ENCODE measurements at regions of chr3 and their contacts with region 1.

Region 1: DNA sequence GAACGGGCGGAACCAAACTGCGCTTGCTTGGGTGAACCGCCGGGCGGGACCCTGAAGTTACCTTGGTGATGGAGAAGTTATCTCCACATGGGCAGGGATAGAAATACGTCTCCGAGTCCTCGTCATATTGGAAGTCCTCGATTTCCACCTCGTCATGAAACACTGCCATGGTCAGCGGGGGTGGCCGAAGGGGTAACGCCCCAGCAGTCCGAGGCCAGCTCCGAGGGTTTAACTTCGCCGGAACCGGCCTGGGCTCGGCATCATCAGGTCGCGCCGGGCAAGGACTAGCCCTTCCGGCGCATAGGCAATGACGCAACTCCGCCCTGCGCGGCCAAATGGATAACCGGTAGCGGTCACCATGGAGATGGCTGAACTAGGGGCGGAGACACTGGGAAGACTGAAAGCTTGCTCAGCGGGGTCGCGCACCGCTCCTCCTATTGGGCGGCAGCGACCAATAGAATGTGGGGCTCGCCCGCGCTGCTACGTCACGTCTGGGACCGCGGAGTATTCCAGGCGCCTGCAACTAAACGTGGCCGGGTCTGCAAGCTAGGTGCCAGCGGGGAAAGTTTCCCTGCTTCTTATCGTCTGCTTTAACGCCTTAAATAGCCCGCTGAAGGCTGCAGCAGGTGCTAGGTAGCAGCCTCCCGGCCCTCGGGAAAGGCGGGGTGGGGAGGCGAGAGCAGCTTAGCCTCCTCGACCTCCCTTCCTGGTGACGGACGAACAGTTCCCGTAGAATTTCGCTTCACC is at the starts of genes DPH3 and OXNAD1:
- DNase-seq: peak; percentile 99
- ATAC-seq: peak; percentile 96
- H3K4me3 Mint-ChIP-seq: peak within 1 kb of the TSS; percentile 100
- H3K27ac Mint-ChIP-seq: peak within 1 kb of the TSS; percentile 100
- H3K4me1 Mint-ChIP-seq: peaks cover 25% of the 10 kb centered on the region
- H3K27me3 Mint-ChIP-seq: no peaks in the 10 kb centered on the region
- CTCF ChIP-seq: no peak
- total RNA-seq, gene DPH3: 13.4 and 14.7 TPM in 2 replicates
- total RNA-seq, gene OXNAD1: 5.5 and 8.7 TPM in 2 replicates

Region 2: GRCh38 chr3:15815696-15816095 is 449.2 kb before region 1 on chr3:
- CTCF ChIA-PET with region 1: no interaction called
- POLR2A ChIA-PET with region 1: interaction called, 10 read pairs
- intact Hi-C with region 1: loop called (anchors 5 kb)
- DNase-seq: no peak
- ATAC-seq: no peak
- H3K4me3 Mint-ChIP-seq: no peak overlapping the region
- H3K27ac Mint-ChIP-seq: no peak overlapping the region
- H3K4me1 Mint-ChIP-seq: peaks cover 28% of the 10 kb centered on the region
- H3K27me3 Mint-ChIP-seq: no peaks in the 10 kb centered on the region
- CTCF ChIP-seq: no peak

Region 3: DNA sequence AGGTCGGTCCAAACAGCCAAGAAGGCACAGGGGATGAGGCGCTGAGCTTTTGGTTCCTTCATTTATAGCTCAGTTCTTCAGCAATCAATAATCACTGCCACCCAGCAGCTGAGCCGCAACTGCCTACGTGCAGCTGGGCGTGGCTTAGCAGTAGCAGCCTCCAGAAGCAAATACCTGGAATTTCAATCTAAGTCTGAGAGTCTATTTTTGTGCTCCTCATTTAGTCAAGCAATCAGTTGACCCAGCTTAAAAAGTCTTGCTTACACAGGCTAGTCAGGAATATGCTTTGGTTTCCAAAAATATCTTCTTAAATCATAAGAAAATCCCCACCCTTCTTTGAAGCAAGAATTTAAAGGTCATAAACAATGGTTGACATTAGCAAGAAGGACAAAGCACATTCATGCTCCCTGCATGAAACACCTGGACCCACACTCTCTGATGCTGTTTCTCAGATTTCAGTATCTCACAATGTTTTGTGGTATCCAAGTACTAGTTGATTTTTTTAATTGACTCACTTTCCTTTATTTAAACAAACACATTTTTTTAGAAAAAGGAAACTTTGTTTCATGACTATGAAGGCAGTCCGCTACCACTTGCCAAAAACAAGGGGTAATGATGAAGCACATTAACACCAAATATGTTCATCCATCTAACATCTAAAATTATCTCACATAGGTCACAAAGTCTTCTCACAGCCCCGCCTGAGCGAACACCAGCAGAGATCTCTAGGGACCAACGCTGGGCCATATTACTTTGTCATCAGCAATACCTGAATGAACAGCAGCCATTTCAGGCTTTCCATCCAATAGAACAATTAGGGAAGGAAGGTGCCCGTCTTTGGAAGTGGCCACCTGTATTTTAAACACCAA is 106.2 kb after region 1 on chr3:
- CTCF ChIA-PET with region 1: no interaction called
- POLR2A ChIA-PET with region 1: no interaction called
- intact Hi-C with region 1: loop called (anchors 5 kb)
- DNase-seq: peak; percentile 32
- ATAC-seq: peak; percentile 59
- H3K4me3 Mint-ChIP-seq: peak overlapping the region; percentile 75
- H3K27ac Mint-ChIP-seq: peak overlapping the region; percentile 93
- H3K4me1 Mint-ChIP-seq: peaks cover 95% of the 10 kb centered on the region
- H3K27me3 Mint-ChIP-seq: no peaks in the 10 kb centered on the region
- CTCF ChIP-seq: no peak

Region 4: DNA sequence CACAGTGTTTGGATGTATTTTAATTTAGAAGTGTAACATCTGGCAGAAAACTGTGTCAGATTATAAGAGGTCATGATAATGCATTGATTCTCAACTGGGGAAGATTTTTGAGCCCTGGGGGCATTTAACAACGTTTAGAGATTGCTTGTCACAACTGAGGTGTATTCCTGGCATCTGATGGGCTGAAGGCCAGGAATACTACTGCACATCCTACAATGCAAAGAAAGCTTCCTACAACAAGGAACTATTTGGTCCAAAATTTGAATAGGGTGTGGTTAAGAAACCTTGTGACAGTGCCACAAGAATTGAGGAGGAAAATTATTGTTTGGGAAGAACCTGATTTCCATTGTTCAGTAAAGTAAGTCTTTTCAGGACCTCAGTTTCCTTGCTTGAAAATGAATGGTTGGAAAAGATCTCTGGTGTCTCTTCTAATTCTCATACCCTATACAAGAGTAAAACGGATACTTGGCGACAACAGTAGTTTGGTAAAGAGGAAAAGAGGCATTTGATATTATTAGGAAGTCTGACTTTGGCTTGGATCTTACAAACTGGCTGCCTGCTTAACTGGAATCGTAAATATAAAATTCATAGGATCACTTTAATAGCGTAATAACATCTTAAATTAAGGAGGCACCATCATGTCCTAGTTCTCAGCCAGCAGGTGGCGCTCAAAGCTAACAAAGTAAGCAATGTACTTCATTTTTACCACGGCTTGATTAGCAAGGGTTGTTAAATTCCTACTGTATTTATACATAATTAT is 336.1 kb after region 1 on chr3:
- CTCF ChIA-PET with region 1: no interaction called
- POLR2A ChIA-PET with region 1: no interaction called
- intact Hi-C with region 1: loop called (anchors 1 kb)
- DNase-seq: peak; percentile 54
- ATAC-seq: peak; percentile 61
- H3K4me3 Mint-ChIP-seq: no peak overlapping the region
- H3K27ac Mint-ChIP-seq: no peak overlapping the region
- H3K4me1 Mint-ChIP-seq: peaks cover 2% of the 10 kb centered on the region
- H3K27me3 Mint-ChIP-seq: peaks cover 5% of the 10 kb centered on the region
- CTCF ChIP-seq: no peak

Region 5: GRCh38 chr3:16658004-16658920 is 393.4 kb after region 1 on chr3:
- CTCF ChIA-PET with region 1: no interaction called
- POLR2A ChIA-PET with region 1: no interaction called
- intact Hi-C with region 1: no loop called
- DNase-seq: no peak
- ATAC-seq: no peak
- H3K4me3 Mint-ChIP-seq: no peak overlapping the region
- H3K27ac Mint-ChIP-seq: no peak overlapping the region
- H3K4me1 Mint-ChIP-seq: peaks cover 4% of the 10 kb centered on the region
- H3K27me3 Mint-ChIP-seq: peaks cover 2% of the 10 kb centered on the region
- CTCF ChIP-seq: no peak

Region 6: DNA sequence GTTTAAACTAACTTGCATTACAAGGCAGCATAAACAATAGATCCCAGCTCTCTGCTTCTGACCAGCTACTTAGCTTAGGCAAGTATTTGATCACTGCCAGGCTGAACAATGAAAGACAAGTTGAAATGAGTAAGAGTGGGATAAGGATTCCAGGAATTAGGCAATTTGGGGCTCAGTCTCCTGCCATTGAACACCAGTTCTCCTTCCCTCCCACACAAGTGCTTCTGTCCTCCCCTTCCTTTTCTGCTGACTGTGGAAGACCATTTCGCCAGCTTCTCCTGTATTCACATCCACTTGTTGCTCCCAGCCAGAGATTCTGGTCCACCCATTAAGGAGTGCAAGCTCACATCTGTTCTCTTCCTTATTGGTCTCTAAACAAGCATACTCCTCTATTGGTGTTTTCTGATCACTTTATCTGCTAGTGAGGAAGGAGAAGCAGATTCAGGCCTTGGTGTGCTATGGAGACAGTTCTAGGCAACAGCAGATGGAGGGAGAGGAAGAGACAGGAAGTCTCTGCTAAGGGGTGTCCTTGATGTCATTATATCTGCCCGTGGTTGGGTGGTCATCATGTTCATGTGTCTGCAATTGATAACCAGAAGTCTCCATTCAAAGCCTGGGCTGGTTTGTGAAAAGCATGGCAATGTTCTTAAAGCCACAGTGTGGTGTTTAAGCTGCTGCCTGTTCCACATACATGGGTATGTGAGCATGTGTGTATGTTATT is 741.4 kb after region 1 on chr3:
- CTCF ChIA-PET with region 1: no interaction called
- POLR2A ChIA-PET with region 1: no interaction called
- intact Hi-C with region 1: no loop called
- DNase-seq: no peak
- ATAC-seq: no peak
- H3K4me3 Mint-ChIP-seq: no peak overlapping the region
- H3K27ac Mint-ChIP-seq: no peak overlapping the region
- H3K4me1 Mint-ChIP-seq: peaks cover 57% of the 10 kb centered on the region
- H3K27me3 Mint-ChIP-seq: no peaks in the 10 kb centered on the region
- CTCF ChIP-seq: no peak

Region 7: DNA sequence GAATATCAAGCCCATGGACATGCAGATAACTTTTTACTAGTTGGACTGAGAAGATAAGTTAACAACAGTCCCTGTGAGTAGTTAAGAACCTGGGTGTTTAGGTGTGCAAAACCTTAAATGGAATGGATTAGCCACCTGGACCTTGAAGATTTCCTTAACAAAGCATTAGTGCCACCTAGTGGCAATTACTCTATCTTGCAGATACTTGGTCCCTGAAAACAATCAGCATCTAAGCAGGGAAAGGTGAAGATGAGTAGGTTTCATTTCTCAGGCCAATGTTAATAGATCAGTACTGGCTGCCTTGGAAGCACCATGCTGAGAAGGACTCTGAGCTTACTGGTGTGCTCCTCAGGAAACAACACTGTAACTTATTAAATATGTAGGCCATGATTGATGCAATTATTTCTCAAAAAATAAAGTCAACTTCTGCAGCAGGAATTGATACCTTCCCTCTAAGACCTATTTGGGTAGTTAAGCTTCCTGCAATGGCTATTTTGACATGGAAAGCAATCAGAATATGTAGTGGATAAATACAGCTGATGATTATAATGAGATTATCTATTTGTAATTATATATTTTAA is 1148.2 kb after region 1 on chr3:
- CTCF ChIA-PET with region 1: no interaction called
- POLR2A ChIA-PET with region 1: no interaction called
- intact Hi-C with region 1: loop called (anchors 5 kb)
- DNase-seq: no peak
- ATAC-seq: peak; percentile 76
- H3K4me3 Mint-ChIP-seq: no peak overlapping the region
- H3K27ac Mint-ChIP-seq: no peak overlapping the region
- H3K4me1 Mint-ChIP-seq: no peaks in the 10 kb centered on the region
- H3K27me3 Mint-ChIP-seq: no peaks in the 10 kb centered on the region
- CTCF ChIP-seq: peak; percentile 69